GM10248 (cell line): ENCODE measurements at regions of chr7 and their contacts with region 1.

Region 1: GRCh38 chr7:23055582-23056178 is 41.8 kb upstream of the HYCC1 start:
- DNase-seq: peak; percentile 68
- CTCF ChIP-seq: peak; percentile 86

Region 2: GRCh38 chr7:22726345-22727185 is 329.1 kb before region 1 on chr7:
- CTCF ChIA-PET with region 1: interaction called, 32 read pairs
- POLR2A ChIA-PET with region 1: no interaction called
- DNase-seq: peak; percentile 76
- CTCF ChIP-seq: peak; percentile 79

Region 3: DNA sequence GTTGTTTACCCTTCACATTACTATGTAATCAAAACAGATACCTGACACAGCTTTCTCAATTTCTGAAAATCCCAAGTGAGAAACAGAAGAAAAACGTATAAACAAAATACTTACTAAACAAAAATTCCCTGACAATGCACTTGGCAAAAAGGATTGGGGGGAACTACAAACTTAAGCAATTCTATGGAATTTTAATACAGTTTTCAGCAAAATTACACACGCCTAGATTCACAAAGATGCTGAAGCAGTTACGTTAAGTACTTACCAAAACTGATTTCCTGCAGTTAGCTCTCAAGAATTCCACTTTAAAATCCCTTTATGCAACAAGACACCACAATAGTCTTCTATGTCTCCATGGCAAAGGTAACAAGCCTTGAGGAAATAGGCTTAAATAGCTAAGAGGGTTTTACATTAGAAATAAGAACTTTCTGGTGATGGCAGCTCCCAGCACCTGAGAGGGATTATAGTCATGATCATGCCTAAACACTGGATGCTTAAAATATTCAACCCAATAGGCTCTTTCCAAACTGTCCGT is 243.9 kb before region 1 on chr7:
- CTCF ChIA-PET with region 1: interaction called, 14 read pairs
- POLR2A ChIA-PET with region 1: no interaction called
- DNase-seq: no peak
- CTCF ChIP-seq: no peak

Region 4: GRCh38 chr7:22845221-22845834 is 210.4 kb before region 1 on chr7:
- CTCF ChIA-PET with region 1: interaction called, 40 read pairs
- POLR2A ChIA-PET with region 1: no interaction called
- DNase-seq: no peak
- CTCF ChIP-seq: no peak

Region 5: DNA sequence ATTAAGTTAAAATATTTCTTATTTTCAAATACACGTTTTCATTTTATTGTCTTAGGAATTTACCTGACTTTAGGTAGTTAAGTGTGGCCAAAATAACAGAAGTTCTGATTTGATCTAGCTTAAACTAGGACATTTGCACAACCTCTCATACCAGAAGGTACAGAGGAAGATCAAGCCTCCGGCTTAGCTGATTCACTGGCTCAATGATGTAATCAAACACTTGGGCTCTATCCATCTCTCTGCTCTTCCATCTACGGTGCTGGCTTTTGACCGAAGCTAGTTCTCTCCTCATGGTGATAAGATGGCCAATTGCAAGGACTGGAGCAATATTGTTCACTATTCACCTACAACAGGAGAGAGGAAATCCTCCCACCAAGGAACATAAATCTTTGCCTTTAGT is 29.5 kb before region 1 on chr7:
- CTCF ChIA-PET with region 1: interaction called, 34 read pairs
- POLR2A ChIA-PET with region 1: no interaction called
- DNase-seq: no peak
- CTCF ChIP-seq: no peak

Region 6: DNA sequence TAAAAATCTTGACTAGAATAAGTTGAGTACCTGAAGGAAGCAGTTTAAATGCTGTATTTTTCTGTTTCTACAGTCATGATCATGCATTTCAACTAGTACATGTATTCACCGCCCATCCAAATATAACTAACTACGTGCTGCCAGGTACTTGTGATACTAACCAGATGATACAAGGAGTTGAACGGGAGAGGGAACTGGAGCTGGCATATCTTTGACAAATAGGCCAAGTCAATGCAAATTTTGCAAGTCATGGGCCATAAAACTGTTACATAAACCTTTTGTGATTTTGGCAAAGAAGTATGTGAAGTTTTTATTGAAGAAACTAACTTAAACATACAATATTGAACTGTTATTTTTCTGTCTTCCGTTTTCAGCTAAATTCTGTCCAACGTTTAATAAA is 140.6 kb after region 1 on chr7:
- CTCF ChIA-PET with region 1: no interaction called
- POLR2A ChIA-PET with region 1: no interaction called
- DNase-seq: no peak
- CTCF ChIP-seq: no peak

Region 7: DNA sequence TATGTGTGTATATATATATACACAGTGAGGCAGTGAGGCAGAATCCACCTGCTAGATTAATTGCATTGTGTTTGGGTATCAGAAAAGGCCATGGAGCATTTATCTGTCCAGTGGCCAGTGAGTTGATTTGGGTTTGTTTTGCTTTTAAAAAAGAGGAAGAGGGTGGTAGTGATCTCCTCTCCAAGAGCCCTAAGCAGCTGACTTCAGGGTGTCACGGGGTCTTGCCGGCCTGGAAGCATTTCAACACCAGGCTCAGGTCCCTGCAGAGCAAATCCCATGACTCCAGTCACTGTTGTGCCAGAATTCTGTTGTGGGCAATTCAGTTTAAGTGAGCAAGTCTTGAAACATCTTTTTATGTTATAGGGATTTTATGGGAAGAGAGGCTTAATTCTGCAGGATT is 160.3 kb after region 1 on chr7:
- CTCF ChIA-PET with region 1: no interaction called
- POLR2A ChIA-PET with region 1: no interaction called
- DNase-seq: no peak
- CTCF ChIP-seq: no peak